ENCODE measurements at regions of chr1 and their contacts with region 1.

Region 1: GRCh38 chr1:161910604-161911003 is 113.1 kb downstream of the OLFML2B start:
- DNase-seq: peak; percentile 57
- H3K4me3 ChIP-seq: no peak overlapping the region
- H3K27me3 ChIP-seq: no peaks in the 10 kb centered on the region
- CTCF ChIP-seq: no peak

Region 2: DNA sequence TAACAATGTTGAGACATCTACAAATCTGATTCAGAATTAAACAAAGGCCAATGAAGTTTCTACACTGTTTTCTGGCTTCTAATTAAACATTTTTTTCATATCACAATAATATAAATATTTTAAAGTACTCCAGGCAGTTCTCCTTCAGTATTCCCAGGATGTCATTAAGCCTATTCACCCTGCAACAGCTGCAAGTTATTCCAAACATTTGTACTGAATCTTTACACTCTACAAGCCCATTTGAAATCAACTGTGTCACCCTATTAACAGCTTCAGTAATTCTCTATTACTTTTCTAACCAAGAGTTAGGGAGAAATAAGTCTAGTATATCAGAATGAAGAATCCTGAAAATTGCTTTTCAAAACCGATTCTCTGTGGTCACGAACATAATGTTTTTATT is 11.5 kb before region 1 on chr1:
- CTCF ChIA-PET with region 1: no interaction called
- POLR2A ChIA-PET with region 1: no interaction called
- DNase-seq: no peak
- H3K4me3 ChIP-seq: no peak overlapping the region
- H3K27me3 ChIP-seq: no peaks in the 10 kb centered on the region
- CTCF ChIP-seq: no peak

Region 3: DNA sequence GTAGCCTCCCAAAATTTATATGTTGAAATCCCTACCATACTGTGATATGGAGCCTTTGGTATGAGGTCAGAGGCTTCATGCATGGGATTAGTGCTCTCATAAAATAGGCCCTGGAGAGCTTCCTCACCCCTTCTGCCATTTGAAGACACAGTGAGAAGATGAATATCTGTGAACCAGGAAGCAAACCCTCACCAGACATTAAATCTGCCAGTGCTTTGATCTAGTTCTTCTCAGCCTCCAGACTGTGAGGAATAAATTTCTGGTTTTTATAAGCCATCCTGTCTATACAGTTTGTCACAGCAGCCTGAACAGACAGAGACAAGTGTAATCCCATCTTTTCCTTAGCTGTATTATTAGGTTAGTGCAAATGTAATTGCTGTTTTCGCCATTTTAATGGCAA is 24.7 kb after region 1 on chr1:
- CTCF ChIA-PET with region 1: no interaction called
- POLR2A ChIA-PET with region 1: no interaction called
- DNase-seq: no peak
- H3K4me3 ChIP-seq: no peak overlapping the region
- H3K27me3 ChIP-seq: no peaks in the 10 kb centered on the region
- CTCF ChIP-seq: no peak

Region 4: GRCh38 chr1:163820766-163821165 is 1910.2 kb after region 1 on chr1:
- CTCF ChIA-PET with region 1: no interaction called
- POLR2A ChIA-PET with region 1: interaction called, 12 read pairs
- DNase-seq: no peak
- H3K4me3 ChIP-seq: no peak overlapping the region
- H3K27me3 ChIP-seq: no peaks in the 10 kb centered on the region
- CTCF ChIP-seq: peak; percentile 24; the same call in 1 of the 2 replicates

Measured in BJ (cell line).